Lower leg skin (tissue), 4 donors: ENCODE measurements at regions of chr10 and their contacts with region 1.

Region 1: GRCh38 chr10:24642622-24643417 is 80.9 kb downstream of the ARHGAP21 start:
- DNase-seq: no peak
- H3K4me3 ChIP-seq: no peak overlapping the region
- CTCF ChIP-seq: peak in 1 of 3 donors; percentile 47
- POLR2A ChIP-seq: no peak

Region 2: DNA sequence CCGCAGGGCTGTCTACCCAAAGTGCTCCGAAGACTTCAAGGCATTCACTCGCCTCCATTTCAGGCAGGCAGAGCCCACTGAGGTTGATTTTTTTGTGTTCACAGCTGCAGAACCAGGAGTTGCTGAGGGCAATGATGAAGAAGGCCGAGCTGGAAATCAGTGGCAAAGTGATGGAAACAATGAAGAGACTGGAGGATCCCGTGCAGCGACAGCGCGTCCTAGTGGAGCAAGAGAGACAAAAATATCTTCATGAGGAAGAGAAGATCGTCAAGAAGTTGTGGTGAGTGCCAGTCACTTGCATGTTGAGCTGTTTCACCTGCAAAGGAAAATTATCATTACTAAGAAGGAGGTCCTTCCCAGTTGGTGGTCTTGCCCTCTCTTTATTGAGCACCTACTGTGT is 129.7 kb before region 1 on chr10:
- intact Hi-C with region 1: no loop called
- DNase-seq: no peak
- H3K4me3 ChIP-seq: no peak overlapping the region
- CTCF ChIP-seq: no peak
- POLR2A ChIP-seq: no peak

Region 3: GRCh38 chr10:25080880-25081581 is 438.2 kb after region 1 on chr10:
- intact Hi-C with region 1: loop called (anchors 10 kb)
- DNase-seq: peak; percentile 78 to 93
- H3K4me3 ChIP-seq: no peak overlapping the region
- CTCF ChIP-seq: peak in 1 of 3 donors; percentile 20
- POLR2A ChIP-seq: no peak